Vagina (tissue), 2 donors: ENCODE measurements at regions of chr1 and their contacts with region 1.

Region 1: DNA sequence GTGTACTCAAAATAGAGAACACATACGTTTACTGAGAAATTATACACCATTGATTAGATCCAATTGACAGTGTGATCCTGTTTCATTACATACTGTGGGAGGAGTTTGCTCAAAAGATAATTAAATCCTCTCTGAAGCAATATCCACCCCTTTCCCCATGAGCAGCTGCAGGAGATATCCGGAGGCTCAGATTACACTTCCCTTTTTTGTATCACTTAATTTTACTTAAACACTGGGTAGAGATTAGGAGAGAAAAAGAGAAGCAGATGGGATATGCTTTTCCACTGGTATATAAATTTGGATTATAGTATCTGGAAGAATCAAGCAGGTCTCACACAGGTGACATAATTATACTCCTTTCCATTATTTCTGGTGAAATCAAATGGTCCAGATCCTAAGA is 333.3 kb upstream of the ZRANB2 start:
- DNase-seq: no peak
- H3K4me3 ChIP-seq: no peak overlapping the region
- H3K27ac ChIP-seq: no peak overlapping the region
- H3K4me1 ChIP-seq: no peaks in the 10 kb centered on the region
- H3K27me3 ChIP-seq: no peaks in the 10 kb centered on the region
- CTCF ChIP-seq: no peak
- POLR2A ChIP-seq: no peak

Region 2: DNA sequence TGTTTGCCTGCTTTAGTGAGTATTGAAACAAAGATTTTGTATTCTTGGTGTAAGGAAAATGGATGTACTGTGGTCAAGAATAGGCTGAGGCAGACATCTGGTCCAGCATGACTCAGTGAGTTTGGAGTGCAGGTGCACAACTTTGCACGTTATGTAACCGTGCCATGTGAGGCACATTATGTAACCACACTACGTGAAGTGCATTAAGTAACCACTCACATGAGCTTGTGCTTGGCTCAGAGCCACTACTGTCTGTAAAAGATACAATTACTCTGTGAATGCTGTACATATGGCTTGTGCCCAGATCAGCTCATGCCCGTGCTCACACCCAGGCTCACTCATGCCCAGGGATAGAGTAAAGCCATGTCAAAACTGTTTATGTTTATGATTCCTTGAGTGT is 786.3 kb before region 1 on chr1:
- intact Hi-C with region 1: no loop called
- DNase-seq: no peak
- H3K4me3 ChIP-seq: no peak overlapping the region
- H3K27ac ChIP-seq: no peak overlapping the region
- H3K4me1 ChIP-seq: no peaks in the 10 kb centered on the region
- H3K27me3 ChIP-seq: no peaks in the 10 kb centered on the region
- CTCF ChIP-seq: no peak
- POLR2A ChIP-seq: no peak

Region 3: DNA sequence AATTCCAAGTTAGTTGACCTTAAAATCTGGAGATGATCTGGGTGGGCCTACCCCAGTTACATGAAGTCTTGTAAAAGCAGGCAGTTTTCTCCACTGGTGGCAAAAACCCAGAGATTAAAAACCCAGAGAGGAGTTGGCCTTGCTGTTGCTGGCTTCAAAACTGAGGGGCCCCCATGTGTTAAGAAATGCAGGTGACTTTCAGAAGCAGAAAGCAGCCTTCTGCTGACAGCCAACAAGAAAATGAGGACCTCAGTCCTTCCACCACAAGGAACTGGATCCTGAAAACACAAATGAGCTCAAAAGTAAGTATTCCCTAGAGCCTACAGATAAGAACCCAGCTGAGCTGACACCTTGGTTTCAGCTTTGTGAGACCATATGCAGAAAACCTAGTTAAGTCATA is 10.4 kb after region 1 on chr1:
- intact Hi-C with region 1: loop called (anchors 1 kb)
- DNase-seq: no peak
- H3K4me3 ChIP-seq: no peak overlapping the region
- H3K27ac ChIP-seq: no peak overlapping the region
- H3K4me1 ChIP-seq: no peaks in the 10 kb centered on the region
- H3K27me3 ChIP-seq: no peaks in the 10 kb centered on the region
- CTCF ChIP-seq: no peak
- POLR2A ChIP-seq: no peak

Region 4: DNA sequence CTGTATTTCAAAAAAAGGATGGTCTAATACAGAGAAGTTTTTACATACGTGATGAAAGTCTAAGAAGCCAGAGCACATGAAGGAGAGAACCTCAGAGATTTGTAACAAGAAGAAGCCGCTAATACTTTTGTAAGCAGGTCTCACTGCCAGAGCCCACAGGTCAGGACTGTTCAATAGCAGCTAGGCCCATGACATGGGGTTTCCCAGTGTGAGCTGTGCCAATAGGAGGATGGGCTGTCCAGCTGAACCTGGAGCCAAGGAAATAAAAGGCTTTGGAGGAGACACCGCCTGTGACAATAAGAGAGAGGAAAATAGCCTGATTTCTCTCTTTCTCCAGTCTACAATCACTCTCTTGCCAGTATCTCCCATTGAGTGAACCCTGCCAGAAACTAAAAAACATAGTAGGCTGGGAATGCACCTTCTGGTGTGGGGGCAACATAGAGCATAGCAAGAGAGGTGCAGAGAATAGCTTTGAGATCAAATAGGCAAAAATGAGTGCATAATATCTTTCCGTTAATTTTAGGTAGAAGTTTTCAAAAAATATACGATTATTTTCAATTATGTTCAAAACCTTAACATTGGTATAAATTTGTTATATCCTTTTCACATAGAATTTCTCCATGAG is 507.9 kb after region 1 on chr1:
- intact Hi-C with region 1: no loop called
- DNase-seq: no peak
- H3K4me3 ChIP-seq: no peak overlapping the region
- H3K27ac ChIP-seq: no peak overlapping the region
- H3K4me1 ChIP-seq: no peaks in the 10 kb centered on the region
- H3K27me3 ChIP-seq: no peaks in the 10 kb centered on the region
- CTCF ChIP-seq: no peak
- POLR2A ChIP-seq: no peak